ENCODE measurements at regions of chr12 and their contacts with region 1.

Region 1: DNA sequence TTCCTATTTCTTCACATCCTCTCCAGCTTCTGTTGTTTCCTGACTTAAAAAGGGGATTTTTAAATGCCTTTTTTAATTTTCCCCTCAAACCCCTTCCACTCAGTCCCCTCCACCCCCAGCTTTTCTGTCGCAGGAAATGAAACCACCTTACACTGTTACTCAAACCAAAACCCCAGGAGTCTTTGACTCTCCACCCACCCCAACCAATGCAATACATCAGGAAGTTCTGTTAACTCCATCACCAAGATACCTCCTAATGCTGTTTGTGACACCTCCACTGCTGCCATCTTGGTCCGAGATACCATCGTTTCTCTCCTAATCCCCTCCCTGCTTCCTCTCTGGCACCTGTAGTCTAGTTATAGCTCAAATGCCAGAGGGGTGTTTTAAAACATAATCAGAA is 25.4 kb upstream of the CPM start:
- DNase-seq: peak; percentile 80
- H3K4me3 Mint-ChIP-seq: peak overlapping the region; percentile 34
- H3K27ac Mint-ChIP-seq: peak overlapping the region; percentile 98
- H3K4me1 Mint-ChIP-seq: peaks cover 54% of the 10 kb centered on the region
- H3K27me3 Mint-ChIP-seq: no peaks in the 10 kb centered on the region

Region 2: DNA sequence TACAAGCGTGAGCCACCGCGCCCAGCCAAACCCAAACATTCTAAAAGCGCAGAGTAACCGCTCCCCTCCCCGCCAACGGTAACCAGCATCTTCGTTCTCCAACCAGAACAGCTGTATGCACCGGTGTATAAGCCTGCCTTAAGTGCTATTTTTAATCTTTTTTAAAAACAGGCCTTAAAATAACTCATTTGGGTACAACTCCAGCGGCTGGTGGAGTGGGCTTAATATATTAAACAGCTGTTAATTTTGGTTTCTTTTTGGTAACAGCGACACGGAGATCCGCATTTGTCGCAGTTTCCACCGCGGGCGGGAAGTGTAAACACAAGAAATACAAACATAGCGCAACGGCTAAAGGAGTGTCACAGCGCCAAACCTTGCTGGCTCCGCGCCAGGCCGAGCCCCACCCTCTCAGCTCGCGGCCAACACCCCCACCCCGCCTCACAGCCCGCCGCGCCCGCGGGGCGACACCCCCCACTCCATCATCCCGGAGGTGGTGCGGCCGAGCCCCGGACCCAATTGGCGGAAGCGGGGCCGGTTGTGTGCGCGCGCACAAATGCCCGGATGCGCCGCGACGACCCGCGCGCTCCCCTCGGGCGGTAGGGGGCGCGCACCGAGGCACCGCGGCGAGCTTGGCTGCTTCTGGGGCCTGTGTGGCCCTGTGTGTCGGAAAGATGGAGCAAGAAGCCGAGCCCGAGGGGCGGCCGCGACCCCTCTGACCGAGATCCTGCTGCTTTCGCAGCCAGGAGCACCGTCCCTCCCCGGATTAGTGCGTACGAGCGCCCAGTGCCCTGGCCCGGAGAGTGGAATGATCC is 150.5 kb before region 1 on chr12 and contains the start of gene MDM2:
- CTCF ChIA-PET with region 1: no interaction called
- intact Hi-C with region 1: loop called (anchors 2 kb)
- DNase-seq: peak; percentile 95
- H3K4me3 Mint-ChIP-seq: peak within 1 kb of the TSS; percentile 97
- H3K27ac Mint-ChIP-seq: peak within 1 kb of the TSS; percentile 98
- H3K4me1 Mint-ChIP-seq: peaks cover 24% of the 10 kb centered on the region
- H3K27me3 Mint-ChIP-seq: no peaks in the 10 kb centered on the region
- total RNA-seq, gene MDM2: 165 to 166 TPM

Region 3: GRCh38 chr12:68932961-68933893 is 25.1 kb before region 1 on chr12 and contains the start of gene CPM:
- CTCF ChIA-PET with region 1: interaction called, 3 read pairs
- intact Hi-C with region 1: loop called (anchors 1 kb)
- DNase-seq: peak; percentile 76
- H3K4me3 Mint-ChIP-seq: peak within 1 kb of the TSS; percentile 82
- H3K27ac Mint-ChIP-seq: peak within 1 kb of the TSS; percentile 58
- H3K4me1 Mint-ChIP-seq: peaks cover 21% of the 10 kb centered on the region
- H3K27me3 Mint-ChIP-seq: peaks cover 22% of the 10 kb centered on the region
- total RNA-seq, gene CPM: 50.5 to 55.1 TPM

Region 4: DNA sequence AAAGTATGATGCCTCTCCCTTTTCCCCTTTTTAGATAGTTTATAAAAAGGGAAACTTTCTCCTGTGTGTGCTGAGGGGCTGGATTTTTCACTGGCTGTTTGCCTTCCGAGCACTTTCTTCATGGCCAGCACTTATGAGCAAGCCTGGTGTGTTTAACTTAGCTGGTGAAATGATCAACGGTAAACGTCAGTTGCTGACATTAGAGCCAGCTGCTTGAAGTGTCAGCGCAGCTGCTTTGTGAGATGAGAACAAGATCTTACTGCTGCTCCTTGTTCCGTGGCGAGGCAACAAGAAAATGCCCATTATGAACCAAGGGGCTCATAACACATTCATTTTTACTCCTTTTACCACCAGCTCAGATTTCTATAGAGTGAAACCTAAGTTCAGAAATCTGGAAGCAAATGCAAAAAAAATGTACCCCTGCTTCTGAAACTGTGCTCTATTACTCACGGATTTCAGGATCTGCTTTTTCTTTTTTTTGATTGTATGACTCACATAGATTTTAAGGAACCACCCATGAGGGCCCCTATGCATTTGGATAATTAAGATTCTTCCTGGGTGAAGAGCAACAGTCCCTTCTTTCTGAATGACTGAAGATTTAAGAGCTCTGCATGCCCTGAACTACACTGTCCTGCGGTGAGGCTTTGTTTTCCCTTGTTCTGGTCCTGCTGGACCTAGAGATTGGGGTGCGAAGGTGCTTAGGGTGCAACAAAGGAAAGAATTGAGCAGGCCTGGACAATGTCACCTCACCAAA is 49.0 kb after region 1 on chr12:
- CTCF ChIA-PET with region 1: no interaction called
- intact Hi-C with region 1: loop called (anchors 1 kb)
- DNase-seq: peak; percentile 51
- H3K4me3 Mint-ChIP-seq: peak overlapping the region; percentile 56
- H3K27ac Mint-ChIP-seq: peak overlapping the region; percentile 83
- H3K4me1 Mint-ChIP-seq: peaks cover 17% of the 10 kb centered on the region
- H3K27me3 Mint-ChIP-seq: peaks cover 28% of the 10 kb centered on the region

Region 5: DNA sequence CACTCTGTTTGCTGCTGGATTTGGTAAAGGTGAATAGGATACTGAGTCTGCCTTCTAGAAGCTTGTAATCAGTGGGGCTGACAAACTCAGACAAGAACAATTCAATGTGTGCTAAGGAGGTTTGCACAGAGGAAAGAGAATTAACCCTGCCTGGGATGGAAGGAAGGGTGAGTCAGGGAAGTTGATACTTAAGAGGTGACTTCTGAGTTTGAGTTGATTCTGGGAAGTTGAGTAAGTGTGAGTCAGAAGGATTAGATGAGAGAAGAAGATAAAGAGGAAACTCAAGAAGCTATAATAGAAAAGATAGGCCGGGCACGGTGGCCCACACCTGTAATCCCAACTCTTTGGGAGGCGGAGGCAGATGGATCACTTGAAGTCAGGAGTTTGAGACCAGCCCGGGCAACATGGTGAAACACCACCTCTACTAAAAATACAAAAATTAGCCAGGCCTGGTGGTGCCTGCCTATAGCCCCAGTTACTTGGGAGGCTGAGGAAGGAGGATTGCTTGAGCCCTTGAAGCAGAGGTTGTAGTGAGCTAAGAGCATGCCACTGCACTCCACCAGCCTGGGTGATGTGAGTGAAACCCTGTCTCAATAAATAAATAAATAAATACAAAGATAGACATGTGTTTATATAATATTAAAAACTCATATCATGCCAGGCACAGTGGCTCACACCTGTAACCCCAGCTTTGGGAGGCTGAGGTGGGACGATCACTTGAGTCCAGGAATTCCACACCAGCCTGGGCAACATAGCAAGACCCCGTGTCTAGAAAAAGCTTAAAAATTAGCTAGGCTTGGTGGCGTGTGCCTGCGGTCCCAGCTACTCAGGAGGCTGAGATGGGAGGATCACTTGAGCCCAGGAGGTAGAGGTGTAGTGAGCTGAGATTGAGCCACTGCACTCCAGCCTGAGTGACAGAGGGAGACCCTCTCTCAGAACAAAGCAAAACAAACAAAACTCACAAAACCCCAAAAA is 101.4 kb after region 1 on chr12:
- CTCF ChIA-PET with region 1: no interaction called
- intact Hi-C with region 1: loop called (anchors 1 kb)
- DNase-seq: peak; percentile 37
- H3K4me3 Mint-ChIP-seq: no peak overlapping the region
- H3K27ac Mint-ChIP-seq: peak overlapping the region; percentile 81
- H3K4me1 Mint-ChIP-seq: peaks cover 49% of the 10 kb centered on the region
- H3K27me3 Mint-ChIP-seq: no peaks in the 10 kb centered on the region